GM12878 (cell line): ENCODE measurements at regions of chr3 and their contacts with region 1.

Region 1: DNA sequence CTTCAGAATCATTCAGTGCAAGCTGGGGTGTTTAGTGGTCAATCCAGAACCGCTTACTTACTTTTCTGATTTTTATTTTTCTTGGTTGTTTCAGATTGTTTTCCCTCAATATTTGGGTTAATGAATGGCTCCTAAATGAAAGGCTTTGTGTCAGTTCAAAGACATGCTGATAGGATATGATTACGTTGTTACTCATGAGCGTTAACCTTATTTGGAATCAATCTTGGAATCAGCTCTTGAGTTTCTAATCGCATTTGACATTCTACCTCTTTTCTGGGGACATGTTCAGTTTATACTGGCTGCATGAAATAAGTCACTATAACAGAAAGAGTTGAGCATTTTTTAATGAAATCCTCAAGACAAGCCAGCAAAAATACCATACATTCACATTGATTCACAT is 50.2 kb downstream of the ATP11B start:
- DNase-seq: no peak
- ATAC-seq: no peak
- H3K4me3 ChIP-seq: no peak overlapping the region
- H3K27ac ChIP-seq: no peak overlapping the region
- H3K4me1 ChIP-seq: no peaks in the 10 kb centered on the region
- H3K27me3 ChIP-seq: no peaks in the 10 kb centered on the region
- CTCF ChIP-seq: no peak
- EP300 ChIP-seq: no peak
- POLR2A ChIP-seq: no peak
- RAD21 ChIP-seq: no peak

Region 2: DNA sequence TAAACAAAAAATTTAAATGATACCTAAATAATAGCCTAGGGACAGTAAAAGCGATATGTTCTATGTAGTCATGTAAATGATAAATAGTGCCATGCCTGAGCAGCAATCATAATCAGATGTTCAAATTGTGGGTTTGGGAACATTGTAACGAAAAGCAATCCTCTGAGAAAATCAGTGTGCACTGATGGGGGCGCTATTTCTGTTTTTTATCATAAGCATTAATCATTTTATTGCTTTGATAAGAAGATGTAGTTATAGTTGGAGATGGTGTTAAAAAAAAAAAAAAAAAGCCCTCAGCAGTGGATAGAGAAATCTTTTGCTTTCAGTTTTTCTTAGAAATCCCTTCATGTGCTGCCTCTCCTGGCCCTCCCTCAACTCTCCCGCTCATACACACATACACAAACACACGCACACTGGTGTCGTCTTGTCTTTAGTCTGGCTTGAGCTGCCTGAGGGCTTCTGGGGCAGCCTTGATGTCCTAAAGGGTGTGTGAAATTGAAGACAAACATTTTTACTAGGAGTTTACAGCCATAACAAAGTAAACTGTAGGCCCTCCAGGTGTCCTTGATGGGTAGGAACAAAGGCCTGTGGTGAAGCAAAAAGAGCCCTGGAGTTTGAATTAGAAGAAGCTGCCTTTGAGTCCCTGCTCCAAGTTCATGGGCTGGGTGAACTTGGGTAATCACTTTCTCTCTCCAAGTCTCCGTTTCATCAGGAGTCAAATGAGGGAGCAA is 703.7 kb before region 1 on chr3:
- CTCF ChIA-PET with region 1: no interaction called
- POLR2A ChIA-PET with region 1: no interaction called
- RAD21 ChIA-PET with region 1: no interaction called
- SMC1A ChIA-PET with region 1: no interaction called
- in situ Hi-C with region 1: no loop called
- intact Hi-C with region 1: no loop called
- DNase-seq: no peak
- ATAC-seq: no peak
- H3K4me3 ChIP-seq: no peak overlapping the region
- H3K27ac ChIP-seq: no peak overlapping the region
- H3K4me1 ChIP-seq: no peaks in the 10 kb centered on the region
- H3K27me3 ChIP-seq: no peaks in the 10 kb centered on the region
- CTCF ChIP-seq: no peak
- EP300 ChIP-seq: no peak
- POLR2A ChIP-seq: no peak
- RAD21 ChIP-seq: no peak

Region 3: DNA sequence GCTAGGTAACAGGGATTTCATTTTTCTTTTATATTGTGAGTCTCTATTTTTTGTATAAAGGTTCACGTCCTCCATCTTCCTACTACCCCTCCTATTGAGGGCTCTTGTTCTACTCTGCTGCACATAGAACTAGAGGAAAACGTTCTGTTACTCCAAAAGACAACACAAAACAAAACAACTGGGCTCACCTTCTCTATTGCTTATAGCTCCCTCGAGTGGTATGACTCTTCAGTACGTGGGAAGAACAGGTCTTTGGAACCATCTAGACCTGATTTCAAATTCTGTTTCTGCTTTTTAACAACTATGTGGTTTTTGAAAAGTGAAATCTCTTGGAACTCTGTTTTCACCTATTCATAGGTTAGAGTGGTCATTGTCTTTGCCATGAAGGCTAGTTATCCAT is 616.5 kb before region 1 on chr3:
- CTCF ChIA-PET with region 1: no interaction called
- POLR2A ChIA-PET with region 1: no interaction called
- RAD21 ChIA-PET with region 1: no interaction called
- SMC1A ChIA-PET with region 1: no interaction called
- in situ Hi-C with region 1: no loop called
- intact Hi-C with region 1: no loop called
- DNase-seq: no peak
- ATAC-seq: no peak
- H3K4me3 ChIP-seq: no peak overlapping the region
- H3K27ac ChIP-seq: no peak overlapping the region
- H3K4me1 ChIP-seq: no peaks in the 10 kb centered on the region
- H3K27me3 ChIP-seq: no peaks in the 10 kb centered on the region; a peak in 1 of 4 replicates
- CTCF ChIP-seq: no peak
- EP300 ChIP-seq: no peak
- POLR2A ChIP-seq: no peak
- RAD21 ChIP-seq: peak; percentile 11; the same call in 1 of the 2 replicates

Region 4: DNA sequence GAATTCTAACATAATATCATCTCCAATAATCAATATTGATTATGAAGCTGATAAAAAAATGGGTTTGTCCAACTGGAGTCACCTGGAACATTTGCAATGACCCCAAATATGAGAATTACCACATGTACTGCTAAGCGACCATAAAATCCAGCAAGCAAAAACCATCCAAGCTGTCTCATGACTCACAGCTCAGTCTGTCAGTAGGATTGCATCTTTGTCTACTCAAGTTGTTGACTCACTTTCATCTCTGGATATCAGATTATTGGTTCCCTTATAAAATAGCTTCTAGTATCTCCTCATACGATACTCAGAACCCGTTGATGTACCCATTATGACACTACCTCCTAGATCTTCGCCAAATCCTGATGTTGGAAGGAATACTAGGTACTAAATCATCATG is 259.9 kb before region 1 on chr3:
- CTCF ChIA-PET with region 1: no interaction called
- POLR2A ChIA-PET with region 1: interaction called, 10 read pairs
- RAD21 ChIA-PET with region 1: no interaction called
- SMC1A ChIA-PET with region 1: no interaction called
- in situ Hi-C with region 1: no loop called
- intact Hi-C with region 1: no loop called
- DNase-seq: no peak
- ATAC-seq: no peak
- H3K4me3 ChIP-seq: no peak overlapping the region
- H3K27ac ChIP-seq: no peak overlapping the region
- H3K4me1 ChIP-seq: no peaks in the 10 kb centered on the region
- H3K27me3 ChIP-seq: no peaks in the 10 kb centered on the region
- CTCF ChIP-seq: no peak
- EP300 ChIP-seq: no peak
- POLR2A ChIP-seq: no peak
- RAD21 ChIP-seq: no peak